Common myeloid progenitor, CD34-positive (primary cell): ENCODE measurements at regions of chr3 and their contacts with region 1.

Region 1: DNA sequence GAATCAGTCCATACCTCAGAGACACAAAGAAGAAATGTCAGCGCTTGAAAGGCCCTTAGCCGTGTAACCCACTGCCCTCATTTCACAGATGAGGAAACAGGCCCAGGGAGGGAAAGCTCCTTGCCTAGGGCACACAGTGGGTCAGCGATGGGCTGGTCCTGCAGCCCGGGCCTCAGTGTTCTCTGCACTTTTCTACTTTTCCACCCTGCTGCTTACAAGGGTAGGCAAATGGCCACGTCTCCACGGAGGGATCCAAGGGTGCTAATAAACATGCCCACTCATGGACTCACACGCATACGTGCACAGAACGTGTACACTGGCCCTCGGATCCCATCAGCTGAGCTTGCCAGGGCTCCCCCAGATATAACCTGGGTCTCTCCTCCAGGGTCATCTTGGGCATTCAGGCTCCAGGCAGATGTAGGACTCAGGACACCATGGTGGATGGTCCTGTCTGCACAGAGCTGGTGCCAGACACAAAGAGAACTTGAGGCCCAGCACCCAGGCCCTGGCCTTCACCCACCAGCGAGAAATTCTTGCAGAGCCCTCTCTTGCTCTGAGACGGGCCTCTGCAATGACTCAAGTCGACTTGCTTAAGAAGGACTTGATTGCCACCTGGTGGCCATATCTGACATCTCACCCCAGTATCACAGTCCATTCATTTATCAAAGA is 34.5 kb upstream of the VPS8 start:
- DNase-seq: peak; percentile 94 to 97 (median 96)
- H3K4me3 ChIP-seq: no peak overlapping the region
- H3K27ac ChIP-seq: no peak overlapping the region
- H3K4me1 ChIP-seq: peaks cover 0 to 11% (median 2%) of the 10 kb centered on the region in 4 experiments
- H3K27me3 ChIP-seq: peaks cover 0 to 3% (median 0%) of the 10 kb centered on the region in 5 experiments

Region 2: GRCh38 chr3:184543843-184544512 is 233.5 kb before region 1 on chr3:
- CTCF ChIA-PET with region 1: interaction called, 16 read pairs
- POLR2A ChIA-PET with region 1: no interaction called
- DNase-seq: peak; percentile 85 to 93 (median 89)
- H3K4me3 ChIP-seq: peak overlapping the region in 1 of 7 experiments; percentile 45
- H3K27ac ChIP-seq: no peak overlapping the region
- H3K4me1 ChIP-seq: peaks cover 0 to 12% (median 3%) of the 10 kb centered on the region in 4 experiments
- H3K27me3 ChIP-seq: peaks cover 0 to 8% (median 3%) of the 10 kb centered on the region in 5 experiments

Region 3: DNA sequence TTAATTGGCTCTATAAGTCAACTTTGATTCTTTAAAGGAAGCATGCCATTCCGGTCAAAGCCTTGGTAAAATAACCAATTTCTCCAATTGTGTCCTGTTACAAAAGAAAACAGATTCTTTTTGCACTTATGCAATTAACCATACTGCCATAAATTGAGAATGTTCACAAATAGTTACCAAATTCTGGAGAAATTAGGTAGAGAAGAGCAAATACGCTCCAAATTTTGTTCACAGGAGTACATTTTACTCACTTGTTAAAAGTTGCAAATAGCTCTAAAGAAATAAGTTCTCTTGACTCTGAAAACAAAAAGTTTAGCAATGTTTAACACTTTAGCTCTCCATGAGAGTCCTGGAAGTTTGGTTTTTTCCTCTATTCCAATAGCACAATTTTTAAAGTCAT is 76.7 kb before region 1 on chr3:
- CTCF ChIA-PET with region 1: no interaction called
- POLR2A ChIA-PET with region 1: no interaction called
- DNase-seq: no peak
- H3K4me3 ChIP-seq: no peak overlapping the region
- H3K27ac ChIP-seq: no peak overlapping the region
- H3K4me1 ChIP-seq: peaks cover 0 to 12% (median 0%) of the 10 kb centered on the region in 4 experiments
- H3K27me3 ChIP-seq: no peaks in the 10 kb centered on the region

Region 4: DNA sequence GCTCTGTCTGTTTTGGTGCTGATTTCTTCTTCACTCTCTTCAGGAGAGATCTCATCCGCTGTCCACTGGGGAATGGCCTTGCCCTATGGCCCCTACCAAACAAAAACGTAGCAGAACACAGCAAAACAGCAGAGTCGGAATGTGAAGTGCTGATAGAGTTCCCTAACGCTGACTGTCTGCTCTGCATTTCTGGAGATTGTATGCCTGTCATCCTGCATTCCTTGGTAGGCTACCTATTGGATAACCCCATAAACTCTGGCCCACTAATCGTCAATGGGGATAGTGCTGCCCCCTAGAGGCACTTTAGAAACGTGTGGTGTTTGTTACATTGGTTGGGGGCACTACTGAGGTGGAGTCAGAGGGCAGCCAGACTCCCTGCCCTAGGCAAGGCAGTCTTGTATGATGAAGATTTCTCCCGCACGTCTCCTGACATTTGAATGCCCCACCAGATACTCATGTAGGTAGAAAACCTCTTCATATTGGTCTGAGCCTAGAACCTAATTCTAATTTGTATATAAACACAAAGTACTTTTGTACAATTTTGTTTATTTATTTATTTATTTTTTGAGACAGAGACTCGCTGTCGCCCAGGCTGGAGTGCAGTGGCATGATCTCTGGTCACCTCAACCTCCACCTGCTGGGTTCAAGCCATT is 50.0 kb before region 1 on chr3:
- CTCF ChIA-PET with region 1: interaction called, 17 read pairs
- POLR2A ChIA-PET with region 1: no interaction called
- DNase-seq: peak; percentile 81 to 87 (median 82)
- H3K4me3 ChIP-seq: no peak overlapping the region
- H3K27ac ChIP-seq: no peak overlapping the region
- H3K4me1 ChIP-seq: no peaks in the 10 kb centered on the region
- H3K27me3 ChIP-seq: no peaks in the 10 kb centered on the region

Region 5: GRCh38 chr3:184800349-184800930 is 23.0 kb after region 1 on chr3:
- CTCF ChIA-PET with region 1: interaction called, 19 read pairs
- POLR2A ChIA-PET with region 1: no interaction called
- DNase-seq: no peak
- H3K4me3 ChIP-seq: no peak overlapping the region
- H3K27ac ChIP-seq: no peak overlapping the region
- H3K4me1 ChIP-seq: peaks cover 2 to 16% (median 6%) of the 10 kb centered on the region in 4 experiments
- H3K27me3 ChIP-seq: no peaks in the 10 kb centered on the region

Region 6: DNA sequence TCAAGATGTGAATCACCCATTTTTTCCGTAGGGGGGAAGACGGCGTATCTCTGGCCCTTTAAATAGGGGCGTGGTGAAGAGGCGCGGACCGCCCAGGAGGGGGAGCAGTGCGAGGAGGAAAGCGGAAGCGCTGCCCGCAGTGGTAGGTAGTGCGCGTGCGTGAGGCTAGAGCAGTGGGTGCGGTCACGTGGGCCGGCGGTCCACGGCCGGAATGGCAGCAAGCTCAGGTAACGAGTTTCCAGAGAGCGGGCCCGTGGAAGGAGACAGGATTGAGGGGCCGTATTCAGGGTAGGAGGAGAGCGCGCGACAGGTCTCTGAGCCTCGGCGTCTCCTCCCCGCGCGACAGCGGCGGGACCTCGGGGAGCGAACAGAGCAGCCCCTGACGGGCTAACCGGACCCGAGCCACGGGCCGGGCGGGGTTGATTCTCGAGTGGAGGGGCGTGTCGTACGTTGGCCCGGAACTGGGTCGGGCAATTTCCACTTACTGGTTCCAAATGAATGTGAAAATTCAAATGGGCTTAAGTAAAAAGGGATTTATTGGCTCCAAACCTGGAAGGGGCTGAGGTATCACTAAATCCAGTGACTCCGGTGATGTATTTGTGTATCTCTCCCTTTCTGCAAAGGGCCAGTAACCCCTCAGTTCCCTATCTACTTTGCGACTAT is 34.7 kb after region 1 on chr3 and contains the start of gene VPS8:
- CTCF ChIA-PET with region 1: interaction called, 14 read pairs
- POLR2A ChIA-PET with region 1: no interaction called
- DNase-seq: peak; percentile 96 to 98 (median 97)
- H3K4me3 ChIP-seq: peak within 1 kb of the TSS; percentile 69 to 97 (median 91)
- H3K27ac ChIP-seq: peak within 1 kb of the TSS; percentile 82 to 83
- H3K4me1 ChIP-seq: peaks cover 24 to 55% (median 40%) of the 10 kb centered on the region in 4 experiments
- H3K27me3 ChIP-seq: no peaks in the 10 kb centered on the region